Activated CD4-positive, alpha-beta T cell treated with anti-CD3 and anti-CD28 coated beads for 36 hours (primary cell): ENCODE measurements at regions of chr1 and their contacts with region 1.

Region 1: DNA sequence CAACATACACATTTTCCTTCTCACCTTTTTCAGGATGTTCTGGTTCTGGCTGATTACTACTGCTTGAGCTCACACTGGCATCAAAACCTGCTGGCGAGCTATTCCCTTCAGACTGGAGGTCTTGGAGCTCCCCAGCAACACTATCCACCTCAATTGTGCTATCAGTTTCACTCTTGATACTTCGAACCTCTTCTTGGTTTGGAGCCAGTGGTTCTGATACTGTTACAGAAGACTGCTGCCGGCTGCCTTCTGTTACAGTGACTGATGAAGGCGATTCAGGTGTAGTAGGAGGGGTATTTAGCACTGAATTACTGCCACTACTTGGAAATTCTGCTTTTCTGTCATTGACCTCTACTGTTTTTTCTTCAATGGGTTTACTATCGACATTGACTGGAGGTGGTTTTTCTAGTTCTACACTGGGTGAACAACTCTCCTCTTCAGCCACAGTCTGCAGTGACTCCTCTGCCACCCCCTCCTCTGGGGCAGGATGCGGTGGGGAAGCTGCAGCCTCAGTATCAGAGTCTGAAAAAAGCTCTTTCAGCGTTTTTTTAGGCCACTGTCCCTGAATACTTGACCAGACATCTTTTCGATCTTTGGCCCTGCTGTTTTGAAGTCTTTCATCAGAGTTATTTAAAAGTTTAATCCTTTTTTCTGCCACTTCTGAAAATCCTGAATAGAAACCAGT is 20.7 kb upstream of the RBM34 start:
- DNase-seq: no peak
- ATAC-seq: peak; percentile 36
- H3K4me3 Mint-ChIP-seq: no peak overlapping the region
- H3K27ac Mint-ChIP-seq: peak overlapping the region; percentile 63
- H3K4me1 Mint-ChIP-seq: peaks cover 13% of the 10 kb centered on the region
- H3K27me3 Mint-ChIP-seq: no peaks in the 10 kb centered on the region

Region 2: DNA sequence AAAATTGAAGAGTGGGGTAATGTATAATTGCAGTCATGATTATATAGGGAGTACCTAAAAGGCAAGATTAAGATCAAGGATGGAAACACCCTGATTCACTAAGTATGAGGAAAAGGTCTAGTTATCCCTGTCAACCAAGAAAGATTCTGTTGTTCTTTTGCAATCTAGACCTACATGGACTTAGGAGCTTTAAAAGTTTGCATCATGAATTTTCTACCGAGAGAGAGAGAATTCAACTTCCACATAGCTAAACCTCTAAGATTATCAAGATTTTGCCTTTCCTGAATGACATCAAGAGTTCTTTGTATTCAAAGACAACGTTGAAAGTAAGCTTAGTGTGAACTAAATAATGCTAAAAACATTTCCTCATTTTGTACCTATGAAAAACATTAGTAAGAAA is 58.1 kb after region 1 on chr1:
- CTCF ChIA-PET with region 1: no interaction called
- POLR2A ChIA-PET with region 1: no interaction called
- intact Hi-C with region 1: loop called in 1 of 2 experiments (anchors 2 kb)
- DNase-seq: no peak
- ATAC-seq: no peak
- H3K4me3 Mint-ChIP-seq: no peak overlapping the region
- H3K27ac Mint-ChIP-seq: no peak overlapping the region
- H3K4me1 Mint-ChIP-seq: peaks cover 25% of the 10 kb centered on the region
- H3K27me3 Mint-ChIP-seq: no peaks in the 10 kb centered on the region